IMR-90 (cell line): ENCODE measurements at regions of chr1 and their contacts with region 1.

Region 1: DNA sequence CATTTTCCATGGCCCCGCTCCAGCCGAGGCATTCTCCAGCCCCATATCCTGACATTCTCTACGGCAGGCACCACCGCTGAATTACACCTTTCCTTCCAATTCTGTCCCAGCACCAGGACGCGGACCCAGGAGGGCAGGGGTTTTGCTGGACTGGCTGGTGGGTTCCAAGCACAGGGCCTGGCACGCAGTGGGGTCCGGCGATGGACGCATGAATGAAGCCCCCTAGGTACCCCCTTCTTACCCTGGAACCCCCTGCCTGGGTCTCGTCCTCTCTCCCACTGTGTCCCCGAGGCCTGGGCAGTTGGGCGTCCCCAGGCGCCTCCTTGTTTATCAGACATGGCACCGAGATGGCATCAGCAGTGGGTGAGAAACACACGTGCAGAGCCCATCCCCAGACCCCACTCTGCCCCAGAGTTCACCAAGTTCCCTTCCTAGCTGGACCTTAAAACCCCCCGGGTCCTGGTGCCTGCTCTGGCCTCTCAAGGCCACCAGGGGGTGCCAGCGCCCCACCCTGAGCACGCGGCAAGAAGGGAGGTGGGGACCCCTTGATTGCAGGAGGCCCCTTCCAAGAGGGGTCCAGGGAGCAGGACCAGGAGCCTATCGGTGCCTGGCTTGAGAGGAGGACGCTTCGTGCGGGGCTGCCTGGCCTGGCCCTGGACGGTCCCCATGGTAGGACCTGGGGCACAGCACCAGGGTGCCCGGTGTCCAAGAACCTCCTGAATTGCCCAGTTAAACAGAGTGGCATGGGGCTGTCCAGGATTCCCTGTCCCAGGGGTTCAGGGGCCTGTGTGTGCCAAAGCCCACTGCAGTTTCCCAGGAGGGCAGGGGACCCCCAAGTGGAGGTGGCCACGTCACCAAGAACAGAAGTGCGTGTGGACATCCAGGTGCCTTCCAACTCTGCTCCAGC is 46.1 kb downstream of the MEGF6 start:
- DNase-seq: peak; percentile 10
- ATAC-seq: peak; percentile 85
- H3K4me3 ChIP-seq: no peak overlapping the region
- H3K27ac ChIP-seq: no peak overlapping the region
- H3K4me1 ChIP-seq: no peaks in the 10 kb centered on the region
- H3K27me3 ChIP-seq: peaks cover 14% of the 10 kb centered on the region
- CTCF ChIP-seq: peak; percentile 91
- POLR2A ChIP-seq: no peak
- RAD21 ChIP-seq: peak; percentile 91

Region 2: DNA sequence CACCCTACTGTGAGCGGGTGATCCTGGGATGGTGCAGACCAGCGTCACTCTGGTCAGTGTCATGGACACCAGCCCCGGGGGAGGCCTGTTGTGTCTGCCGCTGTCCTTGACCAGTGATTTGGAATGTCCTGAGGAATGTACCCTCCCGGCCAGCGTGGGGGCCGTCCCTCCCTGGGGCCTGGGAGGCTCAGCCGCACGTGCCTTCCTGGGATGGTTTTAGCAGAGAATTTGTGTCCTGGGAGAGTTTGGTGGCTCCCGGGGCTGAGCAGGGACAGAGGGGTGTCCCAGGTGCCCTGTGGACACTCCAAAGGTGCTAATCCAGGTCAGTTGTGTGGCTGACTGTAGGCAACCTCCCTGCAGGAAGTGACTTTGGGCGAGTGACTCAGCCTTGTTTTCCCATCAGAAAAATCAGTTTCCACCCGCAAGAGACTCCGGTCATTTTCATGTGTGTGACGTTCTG is 104.5 kb before region 1 on chr1:
- CTCF ChIA-PET with region 1: no interaction called
- POLR2A ChIA-PET with region 1: no interaction called
- dilution Hi-C with region 1: no loop called
- in situ Hi-C with region 1: no loop called
- intact Hi-C with region 1: no loop called
- DNase-seq: no peak
- ATAC-seq: no peak
- H3K4me3 ChIP-seq: no peak overlapping the region
- H3K27ac ChIP-seq: no peak overlapping the region
- H3K4me1 ChIP-seq: no peaks in the 10 kb centered on the region
- H3K27me3 ChIP-seq: peaks cover 16% of the 10 kb centered on the region
- CTCF ChIP-seq: no peak
- POLR2A ChIP-seq: no peak
- RAD21 ChIP-seq: no peak

Region 3: GRCh38 chr1:3483801-3484444 is 81.3 kb before region 1 on chr1:
- CTCF ChIA-PET with region 1: interaction called, 3 read pairs
- POLR2A ChIA-PET with region 1: no interaction called
- dilution Hi-C with region 1: no loop called
- in situ Hi-C with region 1: no loop called
- intact Hi-C with region 1: loop called (anchors 5 kb)
- DNase-seq: no peak
- ATAC-seq: peak; percentile 79
- H3K4me3 ChIP-seq: no peak overlapping the region
- H3K27ac ChIP-seq: no peak overlapping the region
- H3K4me1 ChIP-seq: no peaks in the 10 kb centered on the region
- H3K27me3 ChIP-seq: peaks cover 2% of the 10 kb centered on the region; the same call in 1 of the 2 replicates
- CTCF ChIP-seq: peak; percentile 66
- POLR2A ChIP-seq: no peak
- RAD21 ChIP-seq: peak; percentile 60

Region 4: DNA sequence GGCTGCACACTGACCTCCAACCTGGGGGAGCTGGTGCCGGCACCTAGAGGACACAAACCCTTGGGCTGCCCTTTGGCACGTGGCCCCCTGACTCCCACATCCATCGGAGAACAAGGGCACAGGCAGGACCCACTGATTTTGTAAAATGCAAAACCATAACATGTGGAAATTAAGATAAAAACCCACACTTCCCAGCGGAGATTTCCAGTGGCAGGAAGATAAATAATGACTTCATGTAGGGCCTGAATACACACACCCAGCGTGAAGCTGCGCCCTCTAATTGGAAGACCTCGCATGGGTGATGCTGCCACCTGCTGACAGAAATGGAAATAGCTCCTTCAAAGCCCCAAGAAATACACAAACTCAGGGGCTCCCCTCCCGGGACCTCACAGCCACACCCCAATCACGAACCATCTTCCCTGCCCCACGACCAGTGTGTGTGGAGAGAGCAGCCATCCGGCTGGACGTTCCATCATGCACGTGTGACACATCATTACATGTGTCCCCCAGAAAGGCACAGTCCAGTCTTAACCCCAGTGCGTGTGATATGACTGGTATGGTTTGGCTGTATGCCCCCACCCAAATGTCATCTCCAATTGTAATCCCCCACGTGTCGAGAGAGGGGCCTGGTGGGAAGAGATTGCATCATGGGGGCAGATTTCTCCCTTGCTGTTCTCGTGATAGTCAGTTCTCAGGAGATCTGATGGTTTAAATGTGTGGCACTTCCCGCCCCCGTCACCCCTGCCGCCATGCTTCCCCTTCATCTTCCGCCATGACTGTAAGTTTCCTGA is 53.9 kb after region 1 on chr1:
- CTCF ChIA-PET with region 1: interaction called, 20 read pairs
- POLR2A ChIA-PET with region 1: no interaction called
- dilution Hi-C with region 1: no loop called
- in situ Hi-C with region 1: no loop called
- intact Hi-C with region 1: loop called (anchors 1 kb)
- DNase-seq: peak; percentile 80
- ATAC-seq: peak; percentile 89
- H3K4me3 ChIP-seq: no peak overlapping the region
- H3K27ac ChIP-seq: no peak overlapping the region
- H3K4me1 ChIP-seq: peaks cover 11% of the 10 kb centered on the region
- H3K27me3 ChIP-seq: no peaks in the 10 kb centered on the region
- CTCF ChIP-seq: peak; percentile 92
- POLR2A ChIP-seq: no peak
- RAD21 ChIP-seq: peak; percentile 72

Region 5: DNA sequence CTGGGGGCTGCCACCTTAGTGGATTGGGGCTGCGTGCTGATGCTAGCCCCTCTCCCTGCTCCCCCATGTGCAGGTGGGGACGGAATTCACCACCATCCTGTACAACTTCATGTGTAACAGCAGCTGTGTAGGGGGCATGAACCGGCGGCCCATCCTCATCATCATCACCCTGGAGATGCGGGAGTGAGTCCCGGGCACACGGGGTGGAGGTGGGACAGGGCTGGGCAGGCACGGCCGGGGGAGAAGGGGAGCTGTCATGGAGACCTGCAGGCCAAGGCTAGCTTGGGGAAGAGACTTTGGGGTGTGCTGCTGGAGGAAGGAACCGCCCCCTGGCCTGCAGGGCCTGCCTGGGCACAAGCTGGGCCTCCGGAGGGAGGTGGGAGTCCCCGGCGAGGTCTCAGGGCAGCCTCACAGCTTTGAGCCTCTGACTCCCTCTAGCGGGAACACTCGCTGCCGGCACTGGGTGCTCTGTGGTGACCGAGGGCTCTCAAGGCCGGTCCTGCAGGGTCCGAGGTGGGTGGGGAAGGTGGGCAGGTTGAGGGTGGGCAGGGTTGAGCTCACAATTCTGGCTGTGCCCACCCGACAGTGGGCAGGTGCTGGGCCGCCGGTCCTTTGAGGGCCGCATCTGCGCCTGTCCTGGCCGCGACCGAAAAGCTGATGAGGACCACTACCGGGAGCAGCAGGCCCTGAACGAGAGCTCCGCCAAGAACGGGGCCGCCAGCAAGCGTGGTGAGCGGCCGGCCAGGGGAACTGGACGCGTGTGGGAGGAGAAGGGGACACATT is 162.1 kb after region 1 on chr1:
- CTCF ChIA-PET with region 1: no interaction called
- POLR2A ChIA-PET with region 1: no interaction called
- dilution Hi-C with region 1: no loop called
- in situ Hi-C with region 1: no loop called
- intact Hi-C with region 1: loop called (anchors 10 kb)
- DNase-seq: no peak
- ATAC-seq: peak; percentile 54; the same call in 1 of the 2 replicates
- H3K4me3 ChIP-seq: no peak overlapping the region
- H3K27ac ChIP-seq: no peak overlapping the region
- H3K4me1 ChIP-seq: no peaks in the 10 kb centered on the region
- H3K27me3 ChIP-seq: no peaks in the 10 kb centered on the region; the same call in 1 of the 2 replicates
- CTCF ChIP-seq: peak; percentile 38
- POLR2A ChIP-seq: no peak
- RAD21 ChIP-seq: peak; percentile 21; the same call in 1 of the 2 replicates